HepG2 (cell line): ENCODE measurements at regions of chr7 and their contacts with region 1.

Region 1: GRCh38 chr7:114874170-114874569 is 47.7 kb upstream of the MDFIC start:
- DNase-seq: no peak
- ATAC-seq: no peak
- H3K4me3 ChIP-seq: no peak overlapping the region
- H3K27ac ChIP-seq: no peak overlapping the region
- H3K4me1 ChIP-seq: no peaks in the 10 kb centered on the region
- H3K27me3 ChIP-seq: no peaks in the 10 kb centered on the region
- CTCF ChIP-seq: no peak
- EP300 ChIP-seq: no peak
- POLR2A ChIP-seq: no peak
- RAD21 ChIP-seq: no peak

Region 2: DNA sequence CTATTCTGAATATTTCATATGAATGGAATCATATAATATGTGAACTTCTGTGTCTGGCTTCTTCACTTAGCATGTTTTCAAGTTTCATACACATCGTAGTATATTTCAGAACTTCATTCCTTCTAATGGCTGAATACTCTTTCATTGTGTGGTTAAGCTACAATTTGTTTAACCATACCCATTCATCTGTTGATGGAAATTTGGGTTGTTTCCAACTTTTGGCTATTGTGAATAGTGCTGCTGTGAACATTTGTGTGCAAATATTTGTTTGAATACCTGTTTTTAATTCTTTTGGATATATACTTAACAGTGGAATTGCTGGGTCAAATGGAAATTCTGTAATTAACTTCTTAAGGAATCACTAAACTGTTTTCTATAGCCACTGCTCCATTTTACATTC is 38.3 kb before region 1 on chr7:
- CTCF ChIA-PET with region 1: no interaction called
- POLR2A ChIA-PET with region 1: no interaction called
- in situ Hi-C with region 1: no loop called
- intact Hi-C with region 1: loop called (anchors 1 kb)
- DNase-seq: no peak
- ATAC-seq: no peak
- H3K4me3 ChIP-seq: no peak overlapping the region
- H3K27ac ChIP-seq: no peak overlapping the region
- H3K4me1 ChIP-seq: no peaks in the 10 kb centered on the region
- H3K27me3 ChIP-seq: no peaks in the 10 kb centered on the region
- CTCF ChIP-seq: no peak
- EP300 ChIP-seq: no peak
- POLR2A ChIP-seq: no peak
- RAD21 ChIP-seq: no peak